ENCODE measurements at regions of chr6 and their contacts with region 1.

Region 1: DNA sequence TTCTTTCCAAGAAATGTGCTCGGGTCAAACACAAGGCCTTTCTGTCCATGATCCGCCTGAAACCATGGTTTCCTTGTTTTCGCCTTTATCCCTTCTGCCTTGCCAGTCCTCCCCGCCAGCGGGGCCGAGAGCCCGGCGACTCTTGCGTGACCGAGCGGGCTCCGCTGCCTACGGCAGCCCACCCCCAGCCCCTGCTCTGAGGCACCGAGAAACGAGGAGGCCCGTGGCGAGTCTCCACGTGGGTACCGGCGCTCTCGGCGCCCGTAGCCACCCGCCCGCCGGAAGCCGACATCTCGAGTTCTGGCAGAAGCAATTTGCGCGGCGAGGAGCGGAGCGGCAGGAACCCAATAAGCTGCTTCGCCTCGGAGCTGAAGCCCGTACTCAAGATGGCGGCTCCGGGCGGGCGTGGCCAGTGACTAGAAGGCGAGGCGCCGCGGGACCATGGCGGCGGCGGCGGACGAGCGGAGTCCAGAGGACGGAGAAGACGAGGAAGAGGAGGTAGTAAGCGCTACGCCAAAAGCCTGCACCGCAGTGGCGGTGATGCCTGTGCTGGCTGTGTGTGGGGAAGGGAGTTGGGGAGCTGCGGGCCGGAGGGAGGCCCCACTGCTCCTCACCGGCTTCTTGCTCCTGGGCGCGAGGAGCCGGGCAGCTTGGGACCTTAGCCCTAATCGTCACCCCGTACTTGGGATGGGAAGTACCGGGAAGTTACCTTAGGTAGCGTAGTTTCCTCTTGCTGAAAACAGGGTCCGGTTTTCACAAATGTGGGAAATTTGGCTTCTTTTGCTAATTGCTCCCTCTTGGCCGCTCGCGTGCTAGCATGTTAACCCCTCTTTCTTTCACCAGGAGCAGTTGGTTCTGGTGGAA is at the start of gene GTF3C6:
- DNase-seq: peak; percentile 98
- H3K4me3 Mint-ChIP-seq: peak within 1 kb of the TSS; percentile 93
- H3K27ac Mint-ChIP-seq: peak within 1 kb of the TSS; percentile 97
- H3K4me1 Mint-ChIP-seq: peaks cover 12% of the 10 kb centered on the region
- H3K27me3 Mint-ChIP-seq: no peaks in the 10 kb centered on the region
- total RNA-seq, gene GTF3C6: 145 and 146 TPM in 2 replicates

Region 2: GRCh38 chr6:110873981-110874879 is 84.3 kb before region 1 on chr6 and contains the start of gene AMD1:
- intact Hi-C with region 1: loop called (anchors 2 kb)
- DNase-seq: peak; percentile 98
- H3K4me3 Mint-ChIP-seq: peak within 1 kb of the TSS; percentile 98
- H3K27ac Mint-ChIP-seq: peak within 1 kb of the TSS; percentile 99
- H3K4me1 Mint-ChIP-seq: peaks cover 27% of the 10 kb centered on the region
- H3K27me3 Mint-ChIP-seq: no peaks in the 10 kb centered on the region
- total RNA-seq, gene AMD1: 108 and 113 TPM in 2 replicates

Region 3: DNA sequence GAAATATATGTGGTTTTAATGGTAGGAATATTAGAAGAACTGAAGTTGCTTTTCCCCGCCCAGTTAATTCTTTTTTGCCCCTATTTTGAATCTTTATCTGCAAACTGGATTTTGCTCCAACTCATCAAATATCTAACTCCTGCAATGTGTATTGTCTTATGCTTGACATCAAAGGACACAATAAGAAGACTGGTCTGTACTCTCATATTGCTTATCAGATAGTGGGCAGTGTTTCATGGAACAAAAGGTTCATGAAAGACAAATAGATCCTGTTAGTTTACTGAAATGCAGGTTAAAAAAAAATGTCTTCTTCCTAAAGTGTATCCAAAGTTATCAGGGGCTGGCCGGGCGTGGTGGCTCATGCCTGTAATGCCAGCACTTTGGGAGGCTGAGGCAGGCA is 27.8 kb before region 1 on chr6:
- intact Hi-C with region 1: no loop called
- DNase-seq: no peak
- H3K4me3 Mint-ChIP-seq: no peak overlapping the region
- H3K27ac Mint-ChIP-seq: no peak overlapping the region
- H3K4me1 Mint-ChIP-seq: peaks cover 7% of the 10 kb centered on the region
- H3K27me3 Mint-ChIP-seq: peaks cover 3% of the 10 kb centered on the region

Measured in activated CD4-positive, alpha-beta T cell treated with anti-CD3 and anti-CD28 coated beads, Interleukin-2, amount 10 ng/mL, durations not matched to agents 24 days and 14 days (primary cell).